Endothelial cell of umbilical vein (primary cell): ENCODE measurements at regions of chr18 and their contacts with region 1.

Region 1: DNA sequence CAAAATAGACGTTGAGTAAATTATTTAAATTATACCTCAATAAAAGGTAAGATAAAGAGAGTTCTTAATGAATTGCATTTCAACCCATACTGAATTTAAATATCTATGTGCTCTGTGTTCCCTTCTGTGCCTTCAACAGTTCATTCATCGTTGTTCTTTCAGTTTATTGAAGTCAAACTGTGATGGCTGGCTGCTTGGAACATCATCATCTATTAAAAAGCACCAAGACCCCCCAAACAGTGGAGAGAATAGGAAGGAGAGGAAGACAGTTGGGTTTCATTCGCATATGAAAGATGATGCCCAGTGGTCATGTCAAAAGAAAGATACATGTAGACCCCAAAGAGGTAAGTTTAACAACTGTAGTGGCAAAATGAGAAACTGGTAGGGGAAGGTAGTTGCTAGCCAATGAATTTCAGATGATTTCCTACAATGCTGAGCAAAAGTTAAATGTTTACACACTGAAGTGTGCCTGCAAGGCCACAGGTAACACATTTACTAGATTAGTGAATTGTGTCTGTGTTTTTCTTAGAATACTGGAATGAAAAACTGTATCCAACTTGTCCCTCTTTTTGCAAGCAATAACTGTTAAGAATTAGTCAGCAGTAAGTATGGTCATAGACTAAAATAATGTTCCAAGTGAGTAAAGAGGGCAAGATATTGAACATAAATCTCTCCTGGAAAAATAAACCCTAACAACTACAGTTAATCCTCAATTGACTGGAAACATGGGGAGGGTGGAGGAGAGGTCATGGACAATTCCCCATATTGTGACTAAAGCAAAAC is 331.3 kb downstream of the KIAA1328 start:
- DNase-seq: no peak
- H3K4me3 ChIP-seq: no peak overlapping the region
- H3K27ac ChIP-seq: no peak overlapping the region
- H3K4me1 ChIP-seq: no peaks in the 10 kb centered on the region
- H3K27me3 ChIP-seq: no peaks in the 10 kb centered on the region
- CTCF ChIP-seq: no peak
- POLR2A ChIP-seq: no peak

Region 2: DNA sequence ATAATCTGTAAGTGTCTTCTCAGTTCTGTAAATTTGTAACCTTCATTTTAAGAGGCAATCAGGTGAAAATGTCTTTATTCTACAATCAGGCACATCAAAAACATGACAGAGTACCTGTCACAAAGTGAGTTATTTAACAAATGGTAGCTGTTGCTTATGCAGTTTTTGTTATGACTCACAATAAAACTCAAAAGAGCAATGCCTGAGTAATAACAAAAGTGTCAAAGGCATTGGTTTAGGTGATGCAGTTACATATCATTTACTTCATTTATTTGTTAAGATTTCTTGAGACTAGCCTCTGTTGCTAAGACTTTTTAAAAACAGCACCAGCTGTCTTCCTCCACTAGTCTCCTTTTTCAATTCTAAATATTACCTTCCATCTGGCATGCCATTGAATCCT is 153.5 kb before region 1 on chr18:
- CTCF ChIA-PET with region 1: no interaction called
- POLR2A ChIA-PET with region 1: no interaction called
- dilution Hi-C with region 1: no loop called
- intact Hi-C with region 1: loop called (anchors 10 kb)
- DNase-seq: no peak
- H3K4me3 ChIP-seq: no peak overlapping the region
- H3K27ac ChIP-seq: no peak overlapping the region
- H3K4me1 ChIP-seq: no peaks in the 10 kb centered on the region
- H3K27me3 ChIP-seq: no peaks in the 10 kb centered on the region
- CTCF ChIP-seq: no peak
- POLR2A ChIP-seq: no peak

Region 3: GRCh38 chr18:37107748-37108522 is 52.3 kb before region 1 on chr18:
- CTCF ChIA-PET with region 1: no interaction called
- POLR2A ChIA-PET with region 1: no interaction called
- dilution Hi-C with region 1: no loop called
- intact Hi-C with region 1: no loop called
- DNase-seq: no peak
- H3K4me3 ChIP-seq: no peak overlapping the region
- H3K27ac ChIP-seq: no peak overlapping the region
- H3K4me1 ChIP-seq: no peaks in the 10 kb centered on the region
- H3K27me3 ChIP-seq: no peaks in the 10 kb centered on the region
- CTCF ChIP-seq: no peak
- POLR2A ChIP-seq: no peak

Region 4: GRCh38 chr18:37199741-37200140 is 39.5 kb after region 1 on chr18:
- CTCF ChIA-PET with region 1: no interaction called
- POLR2A ChIA-PET with region 1: no interaction called
- dilution Hi-C with region 1: no loop called
- intact Hi-C with region 1: loop called (anchors 2 kb)
- DNase-seq: no peak
- H3K4me3 ChIP-seq: no peak overlapping the region
- H3K27ac ChIP-seq: no peak overlapping the region
- H3K4me1 ChIP-seq: no peaks in the 10 kb centered on the region
- H3K27me3 ChIP-seq: no peaks in the 10 kb centered on the region
- CTCF ChIP-seq: no peak
- POLR2A ChIP-seq: no peak